Activated CD8-positive, alpha-beta memory T cell treated with anti-CD3 and anti-CD28 coated beads, Interleukin-2, amount 10 ng/mL, durations not matched to agents 7 days and 5 days (primary cell): ENCODE measurements at regions of chr19 and their contacts with region 1.

Region 1: DNA sequence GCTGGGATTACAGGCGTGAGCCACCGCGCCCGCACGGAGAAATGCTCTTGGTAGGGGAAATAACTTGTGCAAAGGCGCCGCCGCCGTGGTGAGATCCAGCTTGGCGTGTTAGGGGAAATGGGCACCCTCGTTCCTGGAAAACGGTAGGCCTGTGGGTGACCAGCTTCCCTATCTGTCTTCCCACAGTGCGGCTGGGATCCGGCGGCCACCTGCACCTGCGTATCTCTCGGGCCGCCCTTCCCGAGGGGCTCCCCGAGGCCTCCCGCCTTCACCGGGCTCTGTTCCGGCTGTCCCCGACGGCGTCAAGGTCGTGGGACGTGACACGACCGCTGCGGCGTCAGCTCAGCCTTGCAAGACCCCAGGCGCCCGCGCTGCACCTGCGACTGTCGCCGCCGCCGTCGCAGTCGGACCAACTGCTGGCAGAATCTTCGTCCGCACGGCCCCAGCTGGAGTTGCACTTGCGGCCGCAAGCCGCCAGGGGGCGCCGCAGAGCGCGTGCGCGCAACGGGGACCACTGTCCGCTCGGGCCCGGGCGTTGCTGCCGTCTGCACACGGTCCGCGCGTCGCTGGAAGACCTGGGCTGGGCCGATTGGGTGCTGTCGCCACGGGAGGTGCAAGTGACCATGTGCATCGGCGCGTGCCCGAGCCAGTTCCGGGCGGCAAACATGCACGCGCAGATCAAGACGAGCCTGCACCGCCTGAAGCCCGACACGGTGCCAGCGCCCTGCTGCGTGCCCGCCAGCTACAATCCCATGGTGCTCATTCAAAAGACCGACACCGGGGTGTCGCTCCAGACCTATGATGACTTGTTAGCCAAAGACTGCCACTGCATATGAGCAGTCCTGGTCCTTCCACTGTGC is 2.4 kb downstream of the GDF15 start:
- DNase-seq: peak; percentile 86
- ATAC-seq: peak; percentile 88
- H3K4me3 Mint-ChIP-seq: peak overlapping the region; percentile 66
- H3K27ac Mint-ChIP-seq: no peak overlapping the region
- H3K4me1 Mint-ChIP-seq: peaks cover 25% of the 10 kb centered on the region
- H3K27me3 Mint-ChIP-seq: peaks cover 59% of the 10 kb centered on the region

Region 2: DNA sequence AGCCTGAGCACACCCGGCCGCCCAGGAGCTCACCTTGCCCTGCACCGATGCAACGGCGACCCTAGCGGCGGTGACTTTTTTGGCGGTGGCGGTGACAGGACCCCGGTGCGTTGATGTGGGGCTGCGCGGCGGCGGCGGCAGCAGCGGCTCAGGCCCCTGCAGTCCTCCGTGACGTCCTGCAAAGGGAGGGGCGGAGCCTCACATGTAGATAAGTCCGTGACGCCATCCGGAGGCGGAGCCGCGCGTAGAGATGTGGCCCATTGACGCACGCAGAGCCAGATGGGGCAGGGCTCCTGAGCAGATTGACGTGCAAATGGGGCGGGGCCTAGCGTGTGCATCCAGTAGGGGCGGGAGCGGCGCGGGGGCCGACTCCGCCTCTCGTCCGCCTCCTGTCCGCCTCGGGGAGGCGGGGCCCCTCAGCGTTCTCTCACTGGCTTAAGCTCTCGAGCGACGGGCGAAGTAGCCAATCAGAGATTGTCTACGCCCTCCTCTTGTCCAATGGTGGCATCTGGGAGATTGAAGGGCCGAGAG is 184.4 kb before region 1 on chr19 and contains the start of gene RAB3A:
- CTCF ChIA-PET with region 1: interaction called, 11 read pairs
- DNase-seq: peak; percentile 100
- ATAC-seq: peak; percentile 93
- H3K4me3 Mint-ChIP-seq: peak within 1 kb of the TSS; percentile 83
- H3K27ac Mint-ChIP-seq: peak within 1 kb of the TSS; percentile 91
- H3K4me1 Mint-ChIP-seq: peaks cover 17% of the 10 kb centered on the region
- H3K27me3 Mint-ChIP-seq: peaks cover 5% of the 10 kb centered on the region
- total RNA-seq, gene RAB3A: 3.5 to 3.7 TPM

Region 3: GRCh38 chr19:18340190-18340989 is 47.9 kb before region 1 on chr19 and contains the start of gene PGPEP1:
- CTCF ChIA-PET with region 1: interaction called, 16 read pairs
- DNase-seq: peak; percentile 73
- ATAC-seq: peak; percentile 71
- H3K4me3 Mint-ChIP-seq: peak within 1 kb of the TSS; percentile 72
- H3K27ac Mint-ChIP-seq: peak within 1 kb of the TSS; percentile 84
- H3K4me1 Mint-ChIP-seq: peaks cover 17% of the 10 kb centered on the region
- H3K27me3 Mint-ChIP-seq: no peaks in the 10 kb centered on the region
- total RNA-seq, gene PGPEP1: 35.5 to 44.7 TPM

Region 4: DNA sequence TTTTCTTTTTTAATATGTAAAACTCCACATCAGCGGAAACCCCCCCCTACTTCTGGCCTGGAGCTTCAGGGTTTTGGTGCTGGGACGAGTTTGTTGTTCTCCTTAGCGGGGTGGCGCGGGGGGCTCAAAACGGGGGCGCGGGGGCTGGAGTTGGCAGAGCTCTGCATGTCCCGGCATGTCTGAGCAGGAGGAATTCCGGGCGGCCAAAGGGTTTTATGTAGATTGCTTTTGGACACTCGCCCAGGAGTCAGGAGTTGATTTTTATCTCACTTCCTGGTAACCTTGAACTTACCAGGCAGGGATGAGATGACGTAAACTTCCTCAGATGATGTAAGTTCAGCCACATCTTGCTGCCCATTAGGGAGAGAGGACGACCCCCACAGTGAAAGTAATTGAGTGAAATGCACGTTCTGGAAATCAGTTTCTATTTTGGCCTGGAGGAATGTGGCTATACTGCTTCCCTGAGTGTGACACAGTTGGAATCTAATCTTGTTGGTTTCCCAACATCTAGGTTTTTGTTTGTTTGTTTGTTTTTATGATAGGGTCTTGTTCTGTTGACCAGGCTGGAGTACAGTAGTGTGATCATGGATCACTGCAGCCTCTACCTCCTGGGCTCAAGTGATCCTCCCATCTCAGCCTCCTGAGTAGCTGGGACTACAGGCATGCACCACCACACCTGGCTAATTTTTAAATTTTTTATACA is 23.4 kb before region 1 on chr19:
- CTCF ChIA-PET with region 1: interaction called, 19 read pairs
- DNase-seq: no peak
- ATAC-seq: no peak
- H3K4me3 Mint-ChIP-seq: no peak overlapping the region
- H3K27ac Mint-ChIP-seq: no peak overlapping the region
- H3K4me1 Mint-ChIP-seq: peaks cover 13% of the 10 kb centered on the region
- H3K27me3 Mint-ChIP-seq: no peaks in the 10 kb centered on the region

Region 5: GRCh38 chr19:18401580-18402112 is 13.3 kb after region 1 on chr19:
- CTCF ChIA-PET with region 1: interaction called, 77 read pairs
- DNase-seq: no peak
- ATAC-seq: peak; percentile 54
- H3K4me3 Mint-ChIP-seq: no peak overlapping the region
- H3K27ac Mint-ChIP-seq: no peak overlapping the region
- H3K4me1 Mint-ChIP-seq: peaks cover 20% of the 10 kb centered on the region
- H3K27me3 Mint-ChIP-seq: peaks cover 14% of the 10 kb centered on the region